Psoas muscle (tissue), 8 donors: ENCODE measurements at regions of chr16 and their contacts with region 1.

Region 1: GRCh38 chr16:50741808-50742575 is at the start of gene CYLD:
- DNase-seq: peak; percentile 100
- ATAC-seq: peak; percentile 97 to 99 (median 98)
- H3K4me3 ChIP-seq: peak within 1 kb of the TSS; percentile 90
- H3K27ac ChIP-seq: peak within 1 kb of the TSS; percentile 94
- H3K4me1 ChIP-seq: peaks cover 24% of the 10 kb centered on the region
- H3K27me3 ChIP-seq: no peaks in the 10 kb centered on the region
- CTCF ChIP-seq: no peak
- total RNA-seq, gene CYLD: 46.9 to 103 (median 61.9) TPM

Region 2: DNA sequence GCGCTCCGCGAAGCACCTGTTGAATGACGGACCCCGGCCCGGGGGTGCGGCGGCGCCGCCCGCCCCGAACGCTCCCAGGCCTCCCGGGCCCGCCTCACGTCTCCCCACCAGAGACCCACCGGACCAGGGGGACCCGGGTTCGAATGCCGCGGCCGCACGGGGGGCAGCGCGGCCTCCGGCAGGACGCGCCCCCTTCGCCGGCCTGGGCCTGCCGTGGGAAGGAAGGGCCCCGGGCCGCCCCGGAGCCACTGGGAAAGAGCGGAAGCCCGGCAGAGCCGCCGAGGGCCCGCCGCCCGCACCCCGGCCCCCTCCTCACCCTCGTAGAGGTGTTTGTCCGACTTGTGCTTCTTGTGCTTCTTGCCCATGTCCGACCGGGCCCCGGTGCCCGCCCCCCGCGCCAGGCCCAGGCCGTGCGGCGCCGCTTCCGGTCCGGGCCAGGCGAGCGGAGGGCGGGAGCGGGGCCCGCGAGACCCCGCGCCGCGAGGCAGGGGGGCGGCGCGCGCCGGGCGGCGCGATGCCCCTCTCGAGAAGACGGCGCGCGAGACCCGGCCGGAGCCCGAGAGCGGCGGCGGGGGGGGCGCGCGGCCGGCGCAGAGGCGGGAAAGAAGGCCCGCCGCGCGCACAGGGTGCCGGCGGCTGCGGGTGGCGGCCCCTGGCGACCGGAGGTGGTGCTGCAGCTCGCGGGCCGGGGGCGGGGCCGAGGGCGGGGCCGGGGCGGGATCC is 373.4 kb before region 1 on chr16 and contains the start of gene BRD7:
- intact Hi-C with region 1: loop called (anchors 5 to 10 kb)
- DNase-seq: peak; percentile 69 to 80
- ATAC-seq: peak; percentile 81 to 90 (median 84)
- H3K4me3 ChIP-seq: peak within 1 kb of the TSS; percentile 94
- H3K27ac ChIP-seq: peak within 1 kb of the TSS; percentile 82
- H3K4me1 ChIP-seq: peaks cover 22% of the 10 kb centered on the region
- H3K27me3 ChIP-seq: no peaks in the 10 kb centered on the region
- CTCF ChIP-seq: peak; percentile 77
- total RNA-seq, gene BRD7: 47.5 to 77.1 (median 52.4) TPM